Tibial artery (tissue), 4 donors: ENCODE measurements at regions of chr10 and their contacts with region 1.

Region 1: DNA sequence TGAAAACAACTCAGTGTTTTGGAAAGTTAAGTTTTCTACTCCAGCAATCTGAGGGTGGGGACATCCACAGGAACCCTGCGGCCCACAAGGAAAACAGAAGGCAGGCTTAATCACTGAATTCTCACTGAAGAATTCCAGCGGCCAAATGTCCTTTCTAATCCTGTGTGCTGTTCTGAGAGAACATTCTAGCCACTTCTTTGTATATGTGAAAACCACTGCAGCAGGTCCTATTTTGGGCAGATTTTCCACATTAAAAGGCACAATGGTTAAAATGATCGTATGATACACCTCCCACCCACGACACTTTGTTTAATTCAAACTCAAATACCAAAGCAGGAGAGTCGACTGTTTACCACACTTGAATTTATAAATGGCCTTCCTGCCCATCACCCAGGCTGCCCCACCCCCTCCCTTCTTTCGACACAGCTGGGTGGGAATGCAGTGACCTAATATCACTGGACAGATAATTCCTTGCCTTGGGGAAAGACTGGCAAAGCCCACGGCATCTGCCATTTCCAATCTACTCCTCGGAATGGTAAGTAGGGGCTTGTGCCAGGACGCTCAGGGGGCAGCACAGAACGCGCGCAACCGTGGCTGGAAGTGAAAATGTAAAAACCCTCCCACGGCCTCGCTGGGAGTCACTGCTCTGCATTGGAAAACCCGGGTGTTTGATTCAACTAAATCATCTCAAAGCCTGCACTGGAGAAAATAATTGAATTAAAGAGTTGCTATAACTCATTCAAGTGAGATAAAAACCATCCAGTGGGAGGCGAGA is 67.0 kb downstream of the CTBP2 start:
- DNase-seq: peak; percentile 83 to 89
- H3K4me3 ChIP-seq: no peak overlapping the region
- H3K27ac ChIP-seq: peak overlapping the region; percentile 74 to 76
- H3K4me1 ChIP-seq: peaks cover 0 to 66% (median 52%) of the 10 kb centered on the region in 4 donors
- H3K27me3 ChIP-seq: no peaks in the 10 kb centered on the region
- CTCF ChIP-seq: no peak

Region 2: GRCh38 chr10:125124907-125125306 is 31.5 kb after region 1 on chr10:
- intact Hi-C with region 1: loop called (anchors 5 kb)
- DNase-seq: peak in 1 of 2 donors; percentile 51
- H3K4me3 ChIP-seq: no peak overlapping the region
- H3K27ac ChIP-seq: peak overlapping the region in 1 of 2 donors; percentile 79
- H3K4me1 ChIP-seq: peaks cover 0 to 96% (median 68%) of the 10 kb centered on the region in 4 donors
- H3K27me3 ChIP-seq: no peaks in the 10 kb centered on the region
- CTCF ChIP-seq: no peak